IMR-90 (cell line): ENCODE measurements at regions of chr7 and their contacts with region 1.

Region 1: DNA sequence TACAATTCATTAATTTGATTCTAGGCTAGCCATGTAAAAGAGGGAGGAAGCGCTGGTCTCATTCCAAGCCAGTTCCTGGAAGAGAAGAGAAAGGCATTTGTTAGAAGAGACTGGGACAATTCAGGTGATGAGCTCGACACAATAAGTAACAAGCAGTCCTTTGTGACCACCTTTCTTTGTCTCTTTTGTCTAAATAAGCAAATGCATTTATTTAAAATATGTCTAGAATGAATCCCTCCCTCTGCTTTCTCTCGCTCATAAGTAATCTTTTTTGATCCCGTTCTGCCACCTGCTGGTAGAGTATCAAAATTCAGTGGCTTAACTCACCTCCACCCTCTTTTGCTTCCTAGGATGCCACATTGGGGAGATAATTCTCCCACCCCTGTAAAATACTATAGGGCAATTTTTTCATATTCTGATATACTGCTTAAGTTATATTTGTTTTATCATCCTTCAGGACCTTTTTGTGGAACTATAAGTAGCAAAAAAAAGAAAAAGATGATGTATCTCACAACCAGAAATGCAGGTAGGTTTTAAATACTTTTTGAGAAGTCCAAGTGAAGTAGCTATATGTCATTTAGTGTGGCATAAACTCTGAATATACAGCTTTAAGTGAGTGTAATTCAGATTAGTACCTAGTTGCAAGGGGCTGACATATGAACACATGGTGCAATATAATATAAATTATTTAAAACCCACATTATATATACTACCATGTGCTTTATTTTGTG is 91.5 kb downstream of the GSDME start:
- DNase-seq: peak; percentile 58
- ATAC-seq: peak; percentile 70
- H3K4me3 ChIP-seq: no peak overlapping the region
- H3K27ac ChIP-seq: no peak overlapping the region
- H3K4me1 ChIP-seq: peaks cover 3% of the 10 kb centered on the region
- H3K27me3 ChIP-seq: no peaks in the 10 kb centered on the region
- CTCF ChIP-seq: peak; percentile 74
- POLR2A ChIP-seq: no peak
- RAD21 ChIP-seq: peak; percentile 74

Region 2: GRCh38 chr7:23570592-23571200 is 1095.0 kb before region 1 on chr7:
- CTCF ChIA-PET with region 1: no interaction called
- POLR2A ChIA-PET with region 1: no interaction called
- dilution Hi-C with region 1: no loop called
- in situ Hi-C with region 1: loop called (anchors 25 kb)
- intact Hi-C with region 1: loop called (anchors 1 kb)
- DNase-seq: peak; percentile 76
- ATAC-seq: peak; percentile 100
- H3K4me3 ChIP-seq: no peak overlapping the region
- H3K27ac ChIP-seq: no peak overlapping the region
- H3K4me1 ChIP-seq: no peaks in the 10 kb centered on the region
- H3K27me3 ChIP-seq: no peaks in the 10 kb centered on the region
- CTCF ChIP-seq: peak; percentile 96
- POLR2A ChIP-seq: peak; percentile 48
- RAD21 ChIP-seq: peak; percentile 98

Region 3: DNA sequence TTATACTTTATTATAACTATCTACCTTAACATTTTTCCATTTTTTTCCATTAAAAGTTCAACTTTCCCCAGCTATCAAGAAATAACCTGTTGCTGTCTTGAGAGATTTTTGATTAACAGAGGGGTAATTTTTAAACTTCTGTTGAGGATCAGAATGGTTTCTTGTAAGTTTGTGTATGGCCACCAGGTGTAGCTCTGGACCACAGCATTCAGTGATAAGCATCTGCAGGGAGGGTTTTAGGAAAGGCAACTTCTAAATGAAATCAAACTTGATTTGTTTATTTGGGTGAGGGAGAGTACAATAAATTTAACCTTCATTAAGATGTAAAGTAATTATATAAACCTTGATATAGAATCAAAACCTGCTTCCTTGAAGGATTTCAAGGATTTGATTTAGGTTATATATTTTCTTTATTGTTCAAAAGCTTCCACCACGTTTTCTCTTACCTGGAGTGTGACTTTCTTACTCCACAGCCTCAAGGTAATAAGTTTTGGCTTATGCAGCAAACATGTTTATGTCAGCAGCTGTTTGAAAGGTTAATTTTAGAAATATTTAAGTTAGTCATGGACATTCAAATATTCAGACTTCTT is 802.4 kb before region 1 on chr7:
- CTCF ChIA-PET with region 1: interaction called, 3 read pairs
- POLR2A ChIA-PET with region 1: no interaction called
- dilution Hi-C with region 1: no loop called
- in situ Hi-C with region 1: loop called (anchors 25 kb)
- intact Hi-C with region 1: loop called (anchors 10 kb)
- DNase-seq: peak; percentile 17
- ATAC-seq: no peak
- H3K4me3 ChIP-seq: no peak overlapping the region
- H3K27ac ChIP-seq: no peak overlapping the region
- H3K4me1 ChIP-seq: no peaks in the 10 kb centered on the region
- H3K27me3 ChIP-seq: no peaks in the 10 kb centered on the region
- CTCF ChIP-seq: peak; percentile 32; the same call in 1 of the 2 replicates
- POLR2A ChIP-seq: no peak
- RAD21 ChIP-seq: peak; percentile 52

Region 4: DNA sequence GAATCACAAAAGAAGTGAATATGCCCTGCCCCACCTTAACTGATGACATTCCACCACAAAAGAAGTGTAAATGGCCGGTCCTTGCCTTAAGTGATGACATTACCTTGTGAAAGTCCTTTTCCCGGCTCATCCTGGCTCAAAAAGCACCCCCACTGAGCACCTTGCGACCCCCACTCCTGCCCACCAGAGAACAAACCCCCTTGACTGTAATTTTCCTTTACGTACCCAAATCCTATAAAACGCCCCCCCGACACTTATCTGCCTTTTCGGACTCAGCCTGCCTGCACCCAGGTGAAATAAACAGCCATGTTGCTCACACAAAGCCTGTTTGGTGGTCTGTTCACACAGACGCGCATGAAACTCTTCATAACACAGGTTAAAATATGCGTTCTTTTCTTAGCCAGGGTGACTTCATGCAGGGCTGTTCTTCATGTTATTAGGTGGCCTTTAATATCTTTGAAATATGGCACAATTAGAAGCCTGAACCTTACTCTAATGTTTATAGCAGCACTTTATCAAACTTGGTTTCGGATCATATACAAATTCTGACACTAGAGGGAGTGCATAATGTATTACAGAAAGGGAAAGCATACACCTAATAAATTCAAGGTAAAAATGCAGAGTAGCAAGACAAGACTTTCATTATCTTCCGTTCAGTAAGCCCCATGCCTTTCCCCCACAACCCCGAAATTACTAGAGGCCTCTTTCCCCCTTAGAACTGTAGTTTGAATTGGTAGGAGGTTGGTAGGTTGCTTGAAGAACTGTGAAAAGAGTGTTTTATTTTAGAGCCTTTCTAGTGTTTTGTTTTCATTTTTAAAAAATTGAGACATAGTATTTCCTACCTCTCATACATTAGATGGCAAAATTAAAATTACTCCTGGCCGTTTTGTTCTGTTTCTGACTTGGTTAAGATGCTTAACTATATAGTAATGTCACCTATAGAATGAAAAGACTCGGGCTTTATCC is 263.8 kb before region 1 on chr7:
- CTCF ChIA-PET with region 1: no interaction called
- POLR2A ChIA-PET with region 1: no interaction called
- dilution Hi-C with region 1: no loop called
- in situ Hi-C with region 1: loop called (anchors 10 kb)
- intact Hi-C with region 1: loop called (anchors 1 kb)
- DNase-seq: peak; percentile 40
- ATAC-seq: peak; percentile 63; the same call in 1 of the 2 replicates
- H3K4me3 ChIP-seq: peak overlapping the region; percentile 45
- H3K27ac ChIP-seq: no peak overlapping the region
- H3K4me1 ChIP-seq: no peaks in the 10 kb centered on the region
- H3K27me3 ChIP-seq: peaks cover 3% of the 10 kb centered on the region
- CTCF ChIP-seq: peak; percentile 53
- POLR2A ChIP-seq: no peak
- RAD21 ChIP-seq: peak; percentile 56

Region 5: DNA sequence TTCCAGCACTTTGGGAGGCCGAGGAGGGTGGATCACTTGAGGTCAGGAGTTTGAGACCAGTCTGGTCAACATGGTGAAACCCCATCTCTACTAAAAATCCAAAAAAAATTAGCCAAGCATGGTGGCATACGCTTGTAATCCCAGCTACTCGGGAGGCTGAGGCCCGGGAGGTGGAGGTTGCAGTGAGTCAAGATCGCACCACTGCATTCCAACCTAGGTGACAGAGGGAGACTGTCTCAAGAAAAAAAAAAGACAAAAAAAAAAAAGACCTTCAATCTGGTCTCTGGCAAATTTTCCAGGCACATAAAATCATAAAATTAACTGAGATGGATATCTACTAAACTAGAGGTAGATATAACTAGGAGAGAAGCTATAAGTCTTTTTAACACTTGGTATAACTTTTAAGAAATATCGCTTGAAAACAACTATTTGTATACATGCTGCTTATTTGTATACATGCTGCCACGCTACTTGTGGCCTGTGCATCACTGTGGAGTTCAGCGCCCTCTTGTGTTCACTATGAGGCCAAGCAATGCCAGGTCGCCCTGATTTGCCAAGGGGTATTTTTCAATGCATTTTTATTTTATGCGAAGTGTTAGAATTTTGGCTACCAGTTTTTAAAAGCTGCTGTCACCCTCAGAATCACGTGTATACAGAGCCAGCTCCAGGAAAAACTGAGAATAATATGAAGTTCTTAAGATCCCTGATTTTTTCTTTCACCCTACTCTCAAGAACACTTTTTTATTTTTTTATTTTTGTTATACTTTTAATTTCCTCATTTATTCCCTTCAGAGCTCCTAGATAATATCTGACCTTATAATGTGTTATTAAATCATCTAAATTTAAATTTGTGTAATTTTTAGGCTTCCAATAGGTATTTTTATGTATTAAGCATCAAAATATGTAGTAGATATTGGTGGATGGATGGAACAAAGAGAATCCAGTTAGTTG is 432.6 kb after region 1 on chr7:
- CTCF ChIA-PET with region 1: interaction called, 5 read pairs
- POLR2A ChIA-PET with region 1: no interaction called
- dilution Hi-C with region 1: no loop called
- in situ Hi-C with region 1: no loop called
- intact Hi-C with region 1: loop called (anchors 5 kb)
- DNase-seq: peak; percentile 75
- ATAC-seq: peak; percentile 82
- H3K4me3 ChIP-seq: no peak overlapping the region
- H3K27ac ChIP-seq: no peak overlapping the region
- H3K4me1 ChIP-seq: no peaks in the 10 kb centered on the region
- H3K27me3 ChIP-seq: no peaks in the 10 kb centered on the region
- CTCF ChIP-seq: peak; percentile 96
- POLR2A ChIP-seq: no peak
- RAD21 ChIP-seq: peak; percentile 85